ENCODE measurements at regions of chr4 and their contacts with region 1.

Region 1: DNA sequence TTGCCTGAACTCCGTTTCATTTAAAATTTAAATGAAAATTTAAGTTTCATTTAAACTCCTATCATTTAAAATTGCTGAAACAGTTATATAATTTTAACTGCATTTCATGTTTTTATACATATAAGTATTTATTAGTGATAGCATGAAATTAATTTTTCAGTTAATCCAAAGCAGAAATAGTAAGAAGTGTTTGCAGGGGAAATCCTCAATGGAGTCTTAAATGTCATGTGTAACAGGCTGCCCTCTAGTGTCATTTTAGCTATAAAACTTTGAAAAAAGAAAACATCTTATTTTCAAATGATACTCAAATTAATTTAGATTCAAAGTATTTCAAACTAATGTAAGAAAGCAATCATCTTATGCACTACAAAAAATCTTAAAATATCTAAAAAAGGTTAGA is 27.2 kb downstream of the TAPT1 start:
- DNase-seq: peak; percentile 34
- H3K4me3 ChIP-seq: no peak overlapping the region
- H3K27ac ChIP-seq: no peak overlapping the region
- H3K4me1 ChIP-seq: peaks cover 2 to 12% of the 10 kb centered on the region in 2 experiments
- H3K27me3 ChIP-seq: no peaks in the 10 kb centered on the region
- CTCF ChIP-seq: peak; percentile 63
- EP300 ChIP-seq: no peak
- RAD21 ChIP-seq: peak; percentile 75

Region 2: GRCh38 chr4:16019649-16020048 is 179.4 kb before region 1 on chr4:
- CTCF ChIA-PET with region 1: interaction called, 20 read pairs
- POLR2A ChIA-PET with region 1: no interaction called
- DNase-seq: no peak
- H3K4me3 ChIP-seq: no peak overlapping the region
- H3K27ac ChIP-seq: no peak overlapping the region
- H3K4me1 ChIP-seq: no peaks in the 10 kb centered on the region
- H3K27me3 ChIP-seq: no peaks in the 10 kb centered on the region; the same call in 1 of the 2 replicates
- CTCF ChIP-seq: no peak
- EP300 ChIP-seq: no peak
- RAD21 ChIP-seq: no peak

Region 3: GRCh38 chr4:16026160-16026761 is 172.8 kb before region 1 on chr4:
- CTCF ChIA-PET with region 1: interaction called, 16 read pairs
- POLR2A ChIA-PET with region 1: no interaction called
- DNase-seq: peak; percentile 39
- H3K4me3 ChIP-seq: peak overlapping the region in 1 of 2 experiments; percentile 29; a peak in 1 of 4 replicates
- H3K27ac ChIP-seq: no peak overlapping the region
- H3K4me1 ChIP-seq: peaks cover 0 to 5% of the 10 kb centered on the region in 2 experiments; a peak in 1 of 4 replicates
- H3K27me3 ChIP-seq: no peaks in the 10 kb centered on the region; the same call in 1 of the 2 replicates
- CTCF ChIP-seq: peak; percentile 96
- EP300 ChIP-seq: no peak
- RAD21 ChIP-seq: peak; percentile 93

Region 4: GRCh38 chr4:16032871-16033513 is 166.1 kb before region 1 on chr4:
- CTCF ChIA-PET with region 1: interaction called, 16 read pairs
- POLR2A ChIA-PET with region 1: no interaction called
- DNase-seq: no peak
- H3K4me3 ChIP-seq: no peak overlapping the region
- H3K27ac ChIP-seq: no peak overlapping the region
- H3K4me1 ChIP-seq: peaks cover 0 to 19% of the 10 kb centered on the region in 2 experiments; a peak in 1 of 4 replicates
- H3K27me3 ChIP-seq: no peaks in the 10 kb centered on the region
- CTCF ChIP-seq: no peak
- EP300 ChIP-seq: no peak
- RAD21 ChIP-seq: no peak

Region 5: GRCh38 chr4:16212138-16212782 is 13.2 kb after region 1 on chr4:
- CTCF ChIA-PET with region 1: interaction called, 13 read pairs
- POLR2A ChIA-PET with region 1: no interaction called
- DNase-seq: no peak
- H3K4me3 ChIP-seq: no peak overlapping the region
- H3K27ac ChIP-seq: no peak overlapping the region
- H3K4me1 ChIP-seq: no peaks in the 10 kb centered on the region; a peak in 1 of 4 replicates
- H3K27me3 ChIP-seq: no peaks in the 10 kb centered on the region
- CTCF ChIP-seq: no peak
- EP300 ChIP-seq: no peak
- RAD21 ChIP-seq: no peak

Measured in SK-N-SH (cell line).